Cardiac septum (tissue), 1 donor: ENCODE measurements at regions of chr14 and their contacts with region 1.

Region 1: GRCh38 chr14:95361373-95362137 is 41.8 kb upstream of the CLMN start:
- DNase-seq: no peak

Region 2: GRCh38 chr14:95389471-95390011 is 28.0 kb after region 1 on chr14:
- intact Hi-C with region 1: loop called (anchors 2 kb)
- DNase-seq: peak; percentile 90

Region 3: GRCh38 chr14:95424529-95424928 is 63.0 kb after region 1 on chr14:
- intact Hi-C with region 1: loop called (anchors 5 kb)
- DNase-seq: no peak